ENCODE measurements at regions of chr12 and their contacts with region 1.

Region 1: GRCh38 chr12:96194971-96195844 is 1.0 kb downstream of the ELK3 start:
- DNase-seq: peak; percentile 78
- H3K4me3 Mint-ChIP-seq: peak overlapping the region; percentile 99
- H3K27ac Mint-ChIP-seq: peak overlapping the region; percentile 99
- H3K4me1 Mint-ChIP-seq: peaks cover 47% of the 10 kb centered on the region
- H3K27me3 Mint-ChIP-seq: no peaks in the 10 kb centered on the region

Region 2: DNA sequence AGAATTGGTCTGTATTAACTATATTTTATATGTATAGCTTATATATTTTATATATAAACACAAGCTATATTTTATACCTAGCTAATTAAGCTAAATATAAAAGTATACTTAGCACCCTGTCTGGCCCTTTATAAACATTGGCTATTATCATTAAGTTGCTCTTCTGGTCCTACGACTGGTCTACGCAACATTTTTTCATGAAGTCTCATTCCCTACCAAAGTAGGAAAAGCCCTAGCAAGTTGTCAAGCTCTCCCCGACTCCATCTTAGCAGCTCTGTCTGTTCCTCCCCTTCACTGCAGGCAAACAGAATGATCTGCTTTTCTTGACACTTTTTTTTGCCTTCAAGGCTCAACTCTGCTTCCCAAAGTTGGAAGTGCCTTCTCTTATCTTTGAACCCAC is 37.8 kb before region 1 on chr12:
- CTCF ChIA-PET with region 1: no interaction called
- POLR2A ChIA-PET with region 1: no interaction called
- DNase-seq: no peak
- H3K4me3 Mint-ChIP-seq: no peak overlapping the region
- H3K27ac Mint-ChIP-seq: no peak overlapping the region
- H3K4me1 Mint-ChIP-seq: no peaks in the 10 kb centered on the region
- H3K27me3 Mint-ChIP-seq: no peaks in the 10 kb centered on the region

Region 3: DNA sequence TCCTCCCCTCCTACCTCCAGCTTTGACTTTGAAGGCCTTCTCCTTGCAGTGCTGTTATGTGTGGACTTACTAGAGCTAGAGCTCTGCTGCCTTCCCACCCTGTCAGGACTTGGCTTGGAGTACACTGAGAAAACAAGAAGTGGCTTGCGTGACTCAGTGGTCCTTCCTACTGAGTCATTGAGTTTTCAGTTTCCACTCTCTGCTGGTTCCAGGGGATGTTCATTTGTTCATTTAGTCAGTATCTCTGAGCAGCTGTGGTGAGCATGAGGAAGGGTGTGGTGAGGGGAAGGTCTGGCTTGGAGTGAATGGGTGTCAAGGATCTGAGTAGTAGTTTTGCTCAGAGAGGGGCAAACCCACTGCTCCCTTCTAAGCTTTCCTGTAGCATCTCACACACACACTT is 18.2 kb before region 1 on chr12:
- CTCF ChIA-PET with region 1: interaction called, 6 read pairs
- POLR2A ChIA-PET with region 1: interaction called, 30 read pairs
- DNase-seq: peak; percentile 84
- H3K4me3 Mint-ChIP-seq: peak overlapping the region; percentile 44
- H3K27ac Mint-ChIP-seq: peak overlapping the region; percentile 93
- H3K4me1 Mint-ChIP-seq: peaks cover 34% of the 10 kb centered on the region
- H3K27me3 Mint-ChIP-seq: no peaks in the 10 kb centered on the region

Measured in activated CD4-positive, alpha-beta memory T cell treated with anti-CD3 and anti-CD28 coated beads, Interleukin-2, amount 10 ng/mL, durations not matched to agents 7 days and 5 days (primary cell).